CD4-positive, alpha-beta memory T cell (primary cell): ENCODE measurements at regions of chr4 and their contacts with region 1.

Region 1: DNA sequence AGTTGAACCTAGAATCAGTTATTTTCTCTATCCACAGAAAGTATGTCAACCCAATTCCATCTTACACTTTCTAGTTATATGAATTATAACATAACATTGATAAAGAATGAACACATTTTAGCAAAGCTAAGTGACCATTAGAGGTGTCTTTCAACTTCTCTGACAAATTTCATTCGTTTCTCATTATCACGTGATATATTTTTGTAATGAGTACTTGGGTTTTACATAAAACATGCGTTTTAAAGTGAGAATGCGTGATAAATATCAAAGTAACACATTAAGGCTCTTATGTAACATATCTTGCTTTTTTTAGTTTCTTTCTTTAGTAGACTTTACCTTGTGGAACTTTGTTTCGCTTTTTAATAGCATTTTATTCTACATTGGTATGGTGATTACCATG is 1715.1 kb upstream of the IGFBP7 start:
- DNase-seq: no peak
- H3K4me3 ChIP-seq: no peak overlapping the region
- H3K4me3 Mint-ChIP-seq: no peak overlapping the region
- H3K27ac ChIP-seq: no peak overlapping the region
- H3K27ac Mint-ChIP-seq: no peak overlapping the region
- H3K4me1 ChIP-seq: no peaks in the 10 kb centered on the region
- H3K4me1 Mint-ChIP-seq: no peaks in the 10 kb centered on the region
- H3K27me3 ChIP-seq: no peaks in the 10 kb centered on the region
- H3K27me3 Mint-ChIP-seq: no peaks in the 10 kb centered on the region

Region 2: DNA sequence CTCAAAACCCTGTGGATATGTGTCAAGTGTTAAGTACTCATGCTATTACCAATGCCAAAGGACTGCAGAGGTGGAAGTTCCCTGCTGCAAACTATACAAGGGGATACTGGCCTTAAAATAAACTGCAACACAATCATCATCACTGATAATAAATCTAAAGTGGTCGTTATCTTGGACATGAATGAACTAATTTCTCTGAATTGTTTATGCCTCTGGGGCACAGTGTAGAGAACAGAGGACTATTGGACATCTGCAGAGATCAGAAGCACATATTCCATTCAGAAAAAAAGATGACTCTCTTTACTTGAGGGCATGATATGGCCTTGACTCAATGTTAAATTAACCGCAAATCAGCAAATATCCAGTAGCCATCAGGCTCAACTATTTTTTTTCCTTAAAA is 1172.5 kb before region 1 on chr4:
- CTCF ChIA-PET with region 1: no interaction called
- POLR2A ChIA-PET with region 1: no interaction called
- intact Hi-C with region 1: no loop called
- DNase-seq: no peak
- H3K4me3 ChIP-seq: no peak overlapping the region
- H3K4me3 Mint-ChIP-seq: no peak overlapping the region
- H3K27ac ChIP-seq: no peak overlapping the region
- H3K27ac Mint-ChIP-seq: no peak overlapping the region
- H3K4me1 ChIP-seq: no peaks in the 10 kb centered on the region
- H3K4me1 Mint-ChIP-seq: no peaks in the 10 kb centered on the region
- H3K27me3 ChIP-seq: no peaks in the 10 kb centered on the region
- H3K27me3 Mint-ChIP-seq: no peaks in the 10 kb centered on the region

Region 3: DNA sequence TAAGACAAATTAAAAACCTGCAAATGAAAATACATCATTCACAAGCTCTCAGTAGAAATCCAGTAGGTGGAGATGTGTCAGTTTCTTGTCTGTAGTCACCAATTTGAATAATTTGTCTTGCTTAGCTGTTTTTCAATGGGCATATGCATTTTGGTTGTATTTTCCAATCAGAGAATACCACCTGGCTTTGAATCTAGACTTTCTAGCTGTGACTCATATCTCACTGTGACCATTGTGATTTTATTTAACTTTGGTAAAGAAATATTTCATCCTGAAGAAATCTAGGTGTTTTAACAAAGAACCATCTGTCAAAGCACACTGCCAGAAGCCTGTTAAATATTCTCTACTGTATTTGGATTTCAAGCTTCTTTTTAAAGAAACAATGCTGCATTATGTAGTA is 64.5 kb before region 1 on chr4:
- CTCF ChIA-PET with region 1: no interaction called
- POLR2A ChIA-PET with region 1: no interaction called
- intact Hi-C with region 1: loop called (anchors 10 kb)
- DNase-seq: no peak
- H3K4me3 ChIP-seq: no peak overlapping the region
- H3K4me3 Mint-ChIP-seq: no peak overlapping the region
- H3K27ac ChIP-seq: no peak overlapping the region
- H3K27ac Mint-ChIP-seq: no peak overlapping the region
- H3K4me1 ChIP-seq: no peaks in the 10 kb centered on the region
- H3K4me1 Mint-ChIP-seq: no peaks in the 10 kb centered on the region
- H3K27me3 ChIP-seq: no peaks in the 10 kb centered on the region
- H3K27me3 Mint-ChIP-seq: no peaks in the 10 kb centered on the region